Mammary epithelial cell (primary cell): ENCODE measurements at regions of chr9 and their contacts with region 1.

Region 1: DNA sequence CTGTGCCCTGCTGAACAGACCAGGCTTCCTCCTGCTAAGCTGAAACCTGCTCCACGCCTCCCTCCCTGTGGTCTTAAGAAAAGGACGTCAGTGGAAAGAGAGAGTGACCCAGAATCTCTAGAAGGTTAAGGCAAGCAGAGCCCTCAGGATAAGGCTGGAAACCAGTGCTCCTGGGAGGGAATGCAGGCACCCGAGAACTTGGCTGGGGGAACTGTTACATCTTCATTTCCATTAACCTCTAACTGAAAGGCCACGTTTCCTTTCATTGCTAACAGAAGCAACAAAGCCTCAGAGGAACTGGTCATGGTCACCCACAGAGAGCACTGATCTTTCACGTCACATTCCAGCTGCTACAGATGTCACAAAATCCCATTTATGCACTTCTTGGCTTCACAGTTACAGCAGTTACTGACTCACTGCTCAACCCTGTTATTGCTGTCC is 26.1 kb upstream of the AKNA start:
- DNase-seq: no peak
- H3K4me3 ChIP-seq: no peak overlapping the region
- H3K27ac ChIP-seq: no peak overlapping the region
- H3K4me1 ChIP-seq: peaks cover 14% of the 10 kb centered on the region
- H3K27me3 ChIP-seq: no peaks in the 10 kb centered on the region
- CTCF ChIP-seq: no peak

Region 2: DNA sequence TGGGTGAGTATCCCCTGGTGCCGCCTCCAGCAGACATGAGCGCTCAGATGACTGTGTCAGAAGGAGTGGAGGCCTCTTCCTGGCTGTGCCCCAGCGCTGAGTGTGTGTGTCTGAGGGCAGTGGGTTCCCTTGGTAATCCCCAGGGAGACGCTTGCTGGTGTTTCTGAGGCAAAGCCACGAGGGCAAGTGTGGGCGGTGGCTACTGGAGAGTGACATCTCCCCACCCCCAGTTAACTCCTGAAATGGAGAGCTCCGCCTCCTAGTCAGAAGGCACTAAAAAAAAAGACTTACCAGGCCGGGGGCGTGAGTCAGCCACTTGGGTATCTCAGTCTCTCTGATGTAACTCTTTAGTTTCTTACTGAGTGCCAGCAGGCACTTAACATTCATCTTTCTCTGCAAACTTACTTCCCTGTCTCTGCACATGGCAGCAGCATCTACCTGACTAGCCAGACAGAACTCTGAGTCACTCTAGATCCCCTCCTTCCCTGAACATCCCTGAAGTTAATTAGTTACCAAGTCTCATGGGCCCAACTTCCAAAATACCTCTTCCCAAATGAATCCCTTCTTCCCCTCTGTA is 64.9 kb before region 1 on chr9:
- CTCF ChIA-PET with region 1: no interaction called
- dilution Hi-C with region 1: loop called (anchors 5 kb)
- in situ Hi-C with region 1: no loop called
- intact Hi-C with region 1: no loop called
- DNase-seq: peak; percentile 95
- H3K4me3 ChIP-seq: no peak overlapping the region
- H3K27ac ChIP-seq: peak overlapping the region; percentile 20
- H3K4me1 ChIP-seq: peaks cover 11% of the 10 kb centered on the region
- H3K27me3 ChIP-seq: no peaks in the 10 kb centered on the region
- CTCF ChIP-seq: no peak